OCI-LY7 (cell line): ENCODE measurements at regions of chr20 and their contacts with region 1.

Region 1: DNA sequence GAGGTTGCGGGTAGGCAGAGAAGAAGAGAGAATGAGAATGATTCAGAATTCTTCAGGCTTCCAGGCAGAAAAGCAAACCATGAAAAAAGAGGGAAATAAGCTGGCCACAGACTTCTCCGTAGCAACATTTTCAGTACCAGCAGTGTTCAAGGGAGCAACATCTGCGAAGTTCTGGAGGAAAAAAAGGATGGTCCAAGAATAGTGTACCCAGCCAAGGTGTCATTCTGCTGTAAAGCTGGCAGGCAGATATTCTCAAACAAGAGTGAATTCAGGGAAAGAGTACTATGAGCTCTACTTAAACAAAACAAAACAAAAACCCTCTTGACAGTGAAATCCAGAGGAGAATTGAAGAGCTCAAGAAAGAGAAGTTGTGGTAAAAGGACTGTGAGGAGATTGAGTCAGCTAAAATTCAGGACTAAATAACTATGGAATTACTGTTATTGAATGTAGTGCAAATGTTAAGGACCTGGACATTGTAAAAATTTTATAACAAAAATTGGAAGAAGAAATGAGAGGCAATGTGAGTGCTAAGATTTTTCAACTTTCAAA is 86.5 kb downstream of the ATRN start:
- DNase-seq: no peak
- H3K4me3 ChIP-seq: no peak overlapping the region
- H3K27ac ChIP-seq: no peak overlapping the region
- H3K4me1 ChIP-seq: peaks cover 11% of the 10 kb centered on the region
- CTCF ChIP-seq: no peak

Region 2: GRCh38 chr20:3407040-3407770 is 150.1 kb before region 1 on chr20 and contains the start of gene DNAAF9:
- CTCF ChIA-PET with region 1: no interaction called
- POLR2A ChIA-PET with region 1: no interaction called
- intact Hi-C with region 1: no loop called
- DNase-seq: no peak
- H3K4me3 ChIP-seq: peak within 1 kb of the TSS; percentile 35
- H3K27ac ChIP-seq: no peak within 1 kb of the TSS
- H3K4me1 ChIP-seq: no peaks in the 10 kb centered on the region
- CTCF ChIP-seq: no peak
- total RNA-seq, gene DNAAF9: not detected in 2 replicates

Region 3: GRCh38 chr20:3510110-3510509 is 47.2 kb before region 1 on chr20:
- CTCF ChIA-PET with region 1: no interaction called
- POLR2A ChIA-PET with region 1: interaction called, 10 read pairs
- intact Hi-C with region 1: no loop called
- DNase-seq: no peak
- H3K4me3 ChIP-seq: no peak overlapping the region
- H3K27ac ChIP-seq: no peak overlapping the region
- H3K4me1 ChIP-seq: no peaks in the 10 kb centered on the region
- CTCF ChIP-seq: no peak

Region 4: GRCh38 chr20:3632311-3633004 is 75.1 kb after region 1 on chr20:
- CTCF ChIA-PET with region 1: no interaction called
- POLR2A ChIA-PET with region 1: no interaction called
- intact Hi-C with region 1: no loop called
- DNase-seq: no peak
- H3K4me3 ChIP-seq: no peak overlapping the region
- H3K27ac ChIP-seq: no peak overlapping the region
- H3K4me1 ChIP-seq: no peaks in the 10 kb centered on the region
- CTCF ChIP-seq: peak; percentile 48; the same call in 1 of the 2 replicates